Activated naive CD4-positive, alpha-beta T cell treated with anti-CD3 and anti-CD28 coated beads, Interleukin-2, amount 10 ng/mL, durations not matched to agents 7 days and 5 days (primary cell): ENCODE measurements at regions of chr14 and their contacts with region 1.

Region 1: DNA sequence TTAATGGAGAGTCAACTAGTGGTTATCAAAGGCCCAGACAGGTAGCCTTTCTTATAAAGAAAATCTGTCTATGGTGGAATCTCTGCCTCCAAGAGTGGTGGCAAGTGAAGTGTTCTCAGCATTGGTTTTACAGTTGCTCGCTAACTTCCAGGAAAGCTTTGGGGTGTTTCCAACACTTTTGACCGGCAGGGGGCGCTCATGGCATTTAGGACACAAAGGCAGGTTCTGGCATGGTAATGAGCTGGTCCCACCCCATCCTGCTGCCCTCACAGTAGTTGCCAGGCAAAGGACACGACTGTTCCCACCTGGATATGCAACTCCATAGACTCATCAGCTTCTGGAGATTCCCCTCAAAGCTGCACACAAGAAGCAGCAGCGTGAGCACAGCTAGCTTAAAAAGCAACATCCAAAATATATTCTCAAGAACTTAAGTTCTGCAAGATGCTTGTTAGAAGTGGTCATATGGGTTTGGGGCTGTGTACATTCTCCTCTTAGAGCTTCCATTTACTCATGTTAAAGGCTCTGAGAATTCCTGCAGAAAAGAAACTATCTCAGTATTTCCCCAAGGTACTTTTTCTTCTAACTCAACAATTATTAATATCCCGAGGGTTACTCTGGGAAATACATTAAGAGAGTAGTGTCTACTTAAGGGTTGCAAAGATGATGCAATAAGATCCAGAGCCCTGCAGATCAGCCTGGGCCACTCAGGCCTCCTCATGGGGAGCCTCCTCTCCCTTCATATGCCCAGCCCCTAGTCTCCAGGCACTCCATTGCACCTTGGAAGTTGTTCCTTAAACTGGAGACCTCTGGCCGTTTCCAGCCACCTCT is 14.8 kb downstream of the PROX2 start:
- DNase-seq: peak; percentile 94
- H3K4me3 Mint-ChIP-seq: no peak overlapping the region
- H3K27ac Mint-ChIP-seq: no peak overlapping the region
- H3K4me1 Mint-ChIP-seq: peaks cover 3% of the 10 kb centered on the region
- H3K27me3 Mint-ChIP-seq: peaks cover 9% of the 10 kb centered on the region

Region 2: DNA sequence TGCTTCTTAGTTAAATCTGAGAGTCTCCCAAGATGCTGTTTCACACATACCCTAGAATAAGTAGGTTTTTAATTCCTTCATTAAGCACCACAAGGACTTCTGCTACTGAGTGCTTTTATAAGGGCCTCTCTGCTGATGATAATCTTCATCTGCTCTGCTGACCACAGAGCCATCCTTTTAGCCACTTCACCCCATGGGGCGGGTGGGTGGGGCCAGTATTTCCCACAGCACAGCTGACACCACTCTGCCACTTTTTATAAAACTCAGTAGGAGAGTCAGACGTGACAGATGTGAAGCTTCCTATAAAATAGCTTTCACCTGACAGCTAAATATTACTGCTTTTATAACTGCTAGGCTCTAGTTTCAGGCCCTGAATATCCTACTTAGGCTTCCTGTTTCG is 127.9 kb before region 1 on chr14:
- CTCF ChIA-PET with region 1: no interaction called
- DNase-seq: no peak
- H3K4me3 Mint-ChIP-seq: no peak overlapping the region
- H3K27ac Mint-ChIP-seq: no peak overlapping the region
- H3K4me1 Mint-ChIP-seq: no peaks in the 10 kb centered on the region
- H3K27me3 Mint-ChIP-seq: no peaks in the 10 kb centered on the region

Region 3: GRCh38 chr14:74784634-74785033 is 76.5 kb before region 1 on chr14:
- CTCF ChIA-PET with region 1: no interaction called
- DNase-seq: no peak
- H3K4me3 Mint-ChIP-seq: no peak overlapping the region
- H3K27ac Mint-ChIP-seq: peak overlapping the region; percentile 6
- H3K4me1 Mint-ChIP-seq: peaks cover 13% of the 10 kb centered on the region
- H3K27me3 Mint-ChIP-seq: no peaks in the 10 kb centered on the region

Region 4: DNA sequence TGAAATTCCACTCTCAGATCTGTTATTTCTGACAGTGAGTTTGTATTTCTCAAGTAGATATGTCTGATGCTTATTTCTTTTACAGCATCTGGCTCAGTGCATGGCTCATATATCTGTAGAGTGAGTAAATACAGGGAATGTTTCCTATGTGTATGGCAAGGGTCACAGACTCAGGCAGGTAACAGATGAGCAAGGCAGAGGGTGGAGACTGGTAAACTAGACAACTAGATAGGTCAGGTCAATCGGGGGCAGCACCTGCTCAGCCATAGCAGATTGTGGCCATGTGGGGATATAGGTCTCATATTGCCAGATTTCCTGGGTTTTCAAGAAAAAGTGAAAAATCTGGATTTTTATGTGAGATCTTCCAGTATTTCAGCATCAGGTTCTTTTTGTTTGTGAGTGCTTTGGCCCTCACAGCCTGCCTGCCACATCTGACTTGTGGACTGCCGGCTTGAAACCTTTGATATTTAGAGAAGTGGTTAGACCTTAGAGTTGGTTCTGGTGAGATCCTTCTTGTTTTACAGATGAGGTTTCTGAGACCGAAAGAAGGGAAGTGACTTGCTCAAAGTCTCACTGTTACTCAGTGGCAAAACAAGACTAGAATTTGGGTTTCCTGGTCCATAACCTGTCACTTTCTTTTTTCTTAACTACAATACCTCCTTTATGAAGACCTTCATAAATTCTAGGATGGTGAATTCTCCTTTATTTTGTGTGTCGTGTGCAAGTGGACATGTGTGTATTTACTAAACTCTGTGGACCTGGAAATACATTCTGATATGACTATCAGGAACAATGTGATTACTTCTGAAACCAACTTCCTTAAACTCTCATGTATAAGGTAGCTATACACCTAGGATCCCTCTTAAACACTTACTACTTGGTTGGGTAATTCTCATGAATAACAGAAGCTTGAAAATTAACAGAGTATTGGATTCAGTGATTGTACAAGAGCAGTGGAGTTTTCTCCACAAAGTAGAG is 19.6 kb before region 1 on chr14:
- CTCF ChIA-PET with region 1: interaction called, 22 read pairs
- DNase-seq: peak; percentile 49
- H3K4me3 Mint-ChIP-seq: no peak overlapping the region
- H3K27ac Mint-ChIP-seq: peak overlapping the region; percentile 84
- H3K4me1 Mint-ChIP-seq: peaks cover 59% of the 10 kb centered on the region
- H3K27me3 Mint-ChIP-seq: no peaks in the 10 kb centered on the region

Region 5: GRCh38 chr14:74881431-74882361 is 20.6 kb after region 1 on chr14 and contains the start of gene DLST:
- CTCF ChIA-PET with region 1: interaction called, 46 read pairs
- DNase-seq: peak; percentile 89
- H3K4me3 Mint-ChIP-seq: peak within 1 kb of the TSS; percentile 99
- H3K27ac Mint-ChIP-seq: peak within 1 kb of the TSS; percentile 99
- H3K4me1 Mint-ChIP-seq: peaks cover 55% of the 10 kb centered on the region
- H3K27me3 Mint-ChIP-seq: no peaks in the 10 kb centered on the region

Region 6: DNA sequence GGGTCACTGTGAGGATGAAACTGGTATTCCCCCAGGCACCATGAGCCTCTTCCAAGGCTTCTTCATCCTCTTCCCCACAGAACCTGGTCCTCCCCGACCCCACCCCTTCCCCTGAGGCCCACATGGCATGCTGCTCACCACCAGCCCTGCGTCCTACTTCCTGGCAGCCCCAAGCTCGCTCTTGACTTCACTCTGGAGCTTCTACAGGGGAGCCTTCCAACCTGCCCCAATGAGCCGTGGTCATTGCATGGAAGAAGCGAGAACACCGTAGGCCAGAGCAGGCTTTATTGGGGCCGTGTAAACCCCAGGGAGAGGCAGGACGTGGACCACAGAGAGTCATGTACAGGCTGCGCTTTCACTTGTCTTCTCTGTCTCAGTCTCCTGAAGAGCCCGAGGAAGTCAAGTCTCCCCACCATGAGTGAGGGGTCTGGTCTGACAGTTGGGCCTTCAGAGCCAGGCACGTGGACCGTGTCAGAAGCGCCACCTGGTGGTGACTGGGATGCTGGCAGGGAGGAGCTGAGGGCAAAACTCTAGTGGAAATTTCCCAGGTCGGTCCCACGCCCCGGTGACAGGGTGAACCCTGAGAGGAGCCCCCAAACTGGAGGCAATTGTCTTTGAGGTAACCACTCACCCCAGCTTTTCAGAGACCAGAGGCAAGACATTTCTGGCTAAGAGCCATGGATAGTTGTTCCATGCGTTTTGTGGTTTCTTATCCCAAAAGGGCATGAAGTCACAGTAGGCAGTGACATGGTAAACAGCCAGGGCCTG is 44.4 kb after region 1 on chr14:
- CTCF ChIA-PET with region 1: interaction called, 395 read pairs
- DNase-seq: peak; percentile 84
- H3K4me3 Mint-ChIP-seq: no peak overlapping the region
- H3K27ac Mint-ChIP-seq: peak overlapping the region; percentile 29
- H3K4me1 Mint-ChIP-seq: peaks cover 6% of the 10 kb centered on the region
- H3K27me3 Mint-ChIP-seq: no peaks in the 10 kb centered on the region

Region 7: DNA sequence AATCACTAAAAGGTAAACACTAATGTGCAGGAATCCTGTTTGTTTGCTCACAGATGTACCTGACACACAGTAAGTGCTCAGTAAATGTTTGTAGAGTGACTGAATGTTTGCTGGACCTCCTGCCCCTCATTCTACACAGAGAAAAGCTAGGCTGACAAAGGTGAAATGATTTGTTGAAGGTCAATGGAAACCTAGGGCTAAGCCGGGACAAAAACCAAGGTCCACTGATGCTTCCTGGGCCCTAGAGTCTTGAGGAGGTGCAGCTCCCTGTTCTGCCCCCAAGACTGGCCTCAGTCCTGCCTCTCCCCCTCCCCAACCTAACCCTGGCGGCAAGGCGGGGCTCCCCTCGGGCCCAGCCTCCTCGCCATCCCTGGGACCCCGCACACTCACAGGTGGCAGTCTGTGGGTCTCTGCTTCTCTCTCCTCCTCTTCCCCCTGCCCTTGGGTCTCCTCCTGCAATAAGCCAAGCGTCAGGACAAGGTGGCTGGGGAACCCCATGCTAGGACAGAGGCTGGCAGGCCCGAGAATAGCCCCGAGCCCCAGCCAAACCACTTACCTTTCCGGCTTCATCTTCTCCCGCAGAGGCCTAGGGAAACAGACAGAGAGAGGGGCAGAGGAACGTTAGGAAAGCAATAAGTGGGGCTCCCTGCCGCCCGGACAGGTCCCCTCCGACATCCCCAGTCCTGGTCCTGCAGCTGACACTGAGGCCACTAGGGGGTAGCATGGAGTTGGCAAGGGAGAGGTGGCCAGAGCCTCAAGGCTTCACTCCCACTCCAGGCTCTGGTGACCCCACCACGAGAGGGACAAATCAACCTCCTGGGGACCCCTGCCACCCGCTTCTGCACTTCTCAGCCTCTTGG is 84.9 kb after region 1 on chr14:
- CTCF ChIA-PET with region 1: interaction called, 37 read pairs
- DNase-seq: peak; percentile 85
- H3K4me3 Mint-ChIP-seq: no peak overlapping the region
- H3K27ac Mint-ChIP-seq: peak overlapping the region; percentile 42
- H3K4me1 Mint-ChIP-seq: peaks cover 32% of the 10 kb centered on the region
- H3K27me3 Mint-ChIP-seq: peaks cover 33% of the 10 kb centered on the region

Region 8: DNA sequence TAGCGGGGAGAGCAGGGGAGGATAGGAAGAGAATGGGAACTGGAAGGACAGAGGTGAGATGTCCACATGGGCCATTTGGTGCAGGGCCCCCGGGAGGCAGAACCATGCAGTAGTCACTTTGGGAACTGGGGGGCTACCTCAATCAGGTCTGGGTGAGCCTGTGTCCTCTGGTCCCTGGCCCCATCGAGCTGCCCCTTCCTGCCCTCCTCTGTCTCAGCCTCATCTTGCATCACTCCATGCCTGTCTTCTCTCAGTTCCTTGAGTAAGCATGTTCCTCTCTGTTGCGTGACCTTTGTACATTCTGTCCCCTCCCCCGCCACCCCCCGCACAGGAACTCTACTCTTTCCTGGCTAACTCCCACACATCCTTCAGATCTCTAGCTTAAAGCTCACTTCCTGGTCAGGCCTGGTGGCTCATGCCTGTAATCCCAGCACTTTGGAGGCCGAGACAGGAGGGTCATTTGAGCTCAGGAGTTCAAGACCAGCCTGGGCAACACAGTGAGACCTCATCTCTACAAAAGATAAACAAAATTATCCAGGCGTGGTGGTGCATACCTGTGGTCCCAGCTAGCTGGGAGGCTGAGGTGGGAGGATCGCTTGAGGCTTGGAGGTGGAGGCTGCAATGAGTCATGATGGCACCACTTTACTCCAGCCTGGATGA is 440.7 kb after region 1 on chr14:
- CTCF ChIA-PET with region 1: interaction called, 13 read pairs
- DNase-seq: no peak
- H3K4me3 Mint-ChIP-seq: no peak overlapping the region
- H3K27ac Mint-ChIP-seq: no peak overlapping the region
- H3K4me1 Mint-ChIP-seq: peaks cover 21% of the 10 kb centered on the region
- H3K27me3 Mint-ChIP-seq: peaks cover 9% of the 10 kb centered on the region